Activated CD4-positive, alpha-beta T cell treated with anti-CD3 and anti-CD28 coated beads, Interleukin-2, amount 10 ng/mL, durations not matched to agents 7 days and 5 days (primary cell): ENCODE measurements at regions of chr22 and their contacts with region 1.

Region 1: GRCh38 chr22:37544955-37545699 is 15.2 kb upstream of the CDC42EP1 start:
- DNase-seq: peak; percentile 54
- H3K4me3 Mint-ChIP-seq: no peak overlapping the region
- H3K27ac Mint-ChIP-seq: no peak overlapping the region
- H3K4me1 Mint-ChIP-seq: peaks cover 28% of the 10 kb centered on the region
- H3K27me3 Mint-ChIP-seq: peaks cover 17% of the 10 kb centered on the region

Region 2: GRCh38 chr22:37529652-37530345 is 15.3 kb before region 1 on chr22:
- CTCF ChIA-PET with region 1: interaction called, 15 read pairs
- POLR2A ChIA-PET with region 1: no interaction called
- DNase-seq: peak; percentile 24
- H3K4me3 Mint-ChIP-seq: no peak overlapping the region
- H3K27ac Mint-ChIP-seq: no peak overlapping the region
- H3K4me1 Mint-ChIP-seq: peaks cover 22% of the 10 kb centered on the region
- H3K27me3 Mint-ChIP-seq: peaks cover 14% of the 10 kb centered on the region